ENCODE measurements at regions of chr9 and their contacts with region 1.

Region 1: DNA sequence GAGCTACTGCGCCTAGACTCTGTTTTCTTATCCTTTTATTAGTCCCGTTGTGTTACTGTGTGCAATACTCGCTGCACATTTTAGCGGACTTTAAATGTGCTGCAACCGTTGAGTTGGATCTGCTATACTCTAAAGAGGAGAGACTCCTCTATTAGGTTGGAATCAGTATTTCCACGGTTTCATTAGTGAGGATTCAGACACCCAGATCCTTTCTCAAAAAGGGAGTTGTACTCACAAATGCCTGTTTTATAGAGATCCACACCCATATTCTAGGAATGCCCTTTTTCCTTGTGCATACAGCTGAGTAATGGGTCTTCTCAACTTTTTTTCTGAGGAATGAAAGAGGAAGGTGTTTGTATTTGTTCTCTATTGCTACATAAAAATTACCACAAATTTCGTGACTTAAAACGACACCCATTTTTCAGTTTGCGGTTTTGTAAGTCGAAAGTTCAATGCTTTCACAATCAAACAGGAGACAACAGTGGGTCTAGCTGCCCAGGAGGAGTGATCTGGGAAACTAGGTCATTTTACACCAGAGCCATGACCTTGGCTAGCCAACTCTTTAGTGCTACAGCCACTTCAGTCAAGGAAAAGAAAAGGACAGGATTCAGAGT is 52.8 kb upstream of the SLC44A1 start:
- DNase-seq: no peak
- H3K4me3 ChIP-seq: no peak overlapping the region
- H3K27ac ChIP-seq: peak overlapping the region in 1 of 5 donors; percentile 20
- H3K4me1 ChIP-seq: peaks cover 0 to 4% (median 0%) of the 10 kb centered on the region in 4 donors
- H3K27me3 ChIP-seq: no peaks in the 10 kb centered on the region
- CTCF ChIP-seq: no peak
- EP300 ChIP-seq: no peak
- POLR2A ChIP-seq: no peak

Region 2: DNA sequence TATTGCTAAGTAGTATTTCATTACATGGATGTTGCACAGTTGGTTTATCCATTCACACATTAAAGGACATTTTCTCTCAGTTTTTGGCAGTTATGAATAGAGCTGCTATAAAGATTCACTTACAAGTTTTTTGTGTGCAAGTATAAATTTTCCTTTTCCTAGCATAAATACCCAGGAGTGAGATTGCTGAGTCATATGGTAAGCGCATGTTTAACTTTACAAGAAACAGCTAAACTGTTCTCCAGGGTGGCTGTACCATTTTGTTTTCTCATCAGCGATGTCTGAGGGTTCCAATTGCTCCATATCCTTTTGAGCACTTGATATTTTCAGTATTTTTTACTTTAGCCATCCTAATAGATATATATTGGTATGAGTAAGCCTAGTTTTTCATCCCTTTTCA is 247.3 kb before region 1 on chr9:
- intact Hi-C with region 1: no loop called
- DNase-seq: no peak
- H3K4me3 ChIP-seq: no peak overlapping the region
- H3K27ac ChIP-seq: no peak overlapping the region
- H3K4me1 ChIP-seq: no peaks in the 10 kb centered on the region
- H3K27me3 ChIP-seq: no peaks in the 10 kb centered on the region
- CTCF ChIP-seq: no peak
- EP300 ChIP-seq: no peak
- POLR2A ChIP-seq: no peak

Region 3: DNA sequence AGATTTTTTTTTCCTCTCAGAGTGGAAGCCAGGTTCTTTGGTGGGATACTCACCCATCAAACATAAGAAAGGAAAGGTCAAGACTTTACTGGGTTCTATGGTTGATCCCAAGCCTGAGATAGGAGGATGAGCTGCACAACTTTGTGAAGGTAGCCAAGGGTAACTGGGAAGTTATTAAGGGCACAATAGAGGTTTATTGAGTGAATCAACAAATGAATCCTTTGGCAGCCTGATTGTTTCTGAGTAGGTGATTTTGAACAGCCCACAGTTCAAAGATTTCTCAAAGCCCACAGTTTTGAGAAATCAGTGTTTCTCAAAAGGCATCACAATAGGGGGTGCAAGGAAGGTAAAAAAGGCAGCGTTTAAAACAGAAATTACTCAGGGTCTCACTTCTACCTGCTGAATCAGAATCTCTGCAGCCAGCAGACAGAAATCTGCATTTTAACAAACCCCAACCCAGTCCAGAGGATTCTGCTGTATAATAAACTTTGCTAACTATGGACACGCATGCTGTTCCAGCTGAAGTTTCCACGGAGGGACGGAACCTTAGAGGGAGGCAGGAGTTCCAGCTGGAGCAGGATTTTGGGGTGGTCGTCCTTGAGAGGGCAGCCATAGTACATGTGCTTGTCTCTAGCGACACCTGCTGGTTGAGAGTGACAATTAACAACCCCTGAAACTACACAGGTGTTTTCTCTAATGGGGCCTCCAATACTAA is 223.5 kb after region 1 on chr9:
- intact Hi-C with region 1: loop called (anchors 10 kb)
- DNase-seq: peak; percentile 59 to 89
- H3K4me3 ChIP-seq: no peak overlapping the region
- H3K27ac ChIP-seq: no peak overlapping the region
- H3K4me1 ChIP-seq: peaks cover 0 to 30% (median 14%) of the 10 kb centered on the region in 4 donors
- H3K27me3 ChIP-seq: no peaks in the 10 kb centered on the region
- CTCF ChIP-seq: peak in 5 of 7 experiments; percentile 63 to 86 (median 80)
- EP300 ChIP-seq: no peak
- POLR2A ChIP-seq: no peak

Measured in stomach (tissue), 19 donors.